Activated CD4-positive, alpha-beta T cell treated with anti-CD3 and anti-CD28 coated beads for 36 hours (primary cell): ENCODE measurements at regions of chr4 and their contacts with region 1.

Region 1: GRCh38 chr4:83639849-83640493 is 104.1 kb downstream of the GPAT3 start:
- DNase-seq: peak; percentile 65
- ATAC-seq: peak; percentile 69
- H3K4me3 Mint-ChIP-seq: no peak overlapping the region
- H3K27ac Mint-ChIP-seq: no peak overlapping the region
- H3K4me1 Mint-ChIP-seq: peaks cover 3% of the 10 kb centered on the region
- H3K27me3 Mint-ChIP-seq: peaks cover 5% of the 10 kb centered on the region

Region 2: GRCh38 chr4:83054928-83055327 is 585.0 kb before region 1 on chr4:
- CTCF ChIA-PET with region 1: no interaction called
- POLR2A ChIA-PET with region 1: no interaction called
- intact Hi-C with region 1: loop called in 1 of 2 experiments (anchors 10 kb)
- DNase-seq: no peak
- ATAC-seq: no peak
- H3K4me3 Mint-ChIP-seq: no peak overlapping the region
- H3K27ac Mint-ChIP-seq: no peak overlapping the region
- H3K4me1 Mint-ChIP-seq: no peaks in the 10 kb centered on the region
- H3K27me3 Mint-ChIP-seq: no peaks in the 10 kb centered on the region

Region 3: DNA sequence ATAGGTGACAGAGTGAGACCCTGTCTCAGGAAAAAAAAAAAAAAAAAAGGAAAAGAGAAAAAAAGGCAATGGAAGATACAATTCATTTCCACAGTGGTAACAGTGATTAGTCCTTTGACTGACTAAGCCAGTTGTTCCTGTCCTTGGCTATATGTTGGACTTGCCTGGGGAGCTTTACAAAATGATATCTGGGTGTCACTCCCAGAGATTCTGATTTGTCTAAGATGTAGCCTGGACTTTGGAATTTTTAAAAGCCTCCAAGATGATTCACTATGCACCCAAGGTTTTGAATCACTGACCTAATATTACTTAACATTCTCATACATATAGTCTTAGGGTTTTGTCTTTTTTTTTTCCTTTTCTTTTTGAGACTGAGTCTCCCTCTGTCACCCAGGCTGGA is 201.3 kb before region 1 on chr4:
- CTCF ChIA-PET with region 1: no interaction called
- POLR2A ChIA-PET with region 1: no interaction called
- intact Hi-C with region 1: no loop called
- DNase-seq: no peak
- ATAC-seq: no peak
- H3K4me3 Mint-ChIP-seq: no peak overlapping the region
- H3K27ac Mint-ChIP-seq: no peak overlapping the region
- H3K4me1 Mint-ChIP-seq: peaks cover 3% of the 10 kb centered on the region
- H3K27me3 Mint-ChIP-seq: no peaks in the 10 kb centered on the region

Region 4: GRCh38 chr4:83503974-83504373 is 136.0 kb before region 1 on chr4:
- CTCF ChIA-PET with region 1: interaction called, 29 read pairs
- POLR2A ChIA-PET with region 1: no interaction called
- intact Hi-C with region 1: loop called (anchors 1 kb)
- DNase-seq: peak; percentile 28
- ATAC-seq: peak; percentile 51
- H3K4me3 Mint-ChIP-seq: no peak overlapping the region
- H3K27ac Mint-ChIP-seq: peak overlapping the region; percentile 32
- H3K4me1 Mint-ChIP-seq: peaks cover 12% of the 10 kb centered on the region
- H3K27me3 Mint-ChIP-seq: no peaks in the 10 kb centered on the region

Region 5: GRCh38 chr4:83961575-83961974 is 321.6 kb after region 1 on chr4:
- CTCF ChIA-PET with region 1: no interaction called
- POLR2A ChIA-PET with region 1: no interaction called
- intact Hi-C with region 1: loop called in 1 of 2 experiments (anchors 10 kb)
- DNase-seq: no peak
- ATAC-seq: no peak
- H3K4me3 Mint-ChIP-seq: no peak overlapping the region
- H3K27ac Mint-ChIP-seq: no peak overlapping the region
- H3K4me1 Mint-ChIP-seq: no peaks in the 10 kb centered on the region
- H3K27me3 Mint-ChIP-seq: no peaks in the 10 kb centered on the region

Region 6: GRCh38 chr4:84503495-84504437 is 863.8 kb after region 1 on chr4:
- CTCF ChIA-PET with region 1: no interaction called
- POLR2A ChIA-PET with region 1: no interaction called
- intact Hi-C with region 1: loop called (anchors 1 kb)
- DNase-seq: peak; percentile 44
- ATAC-seq: peak; percentile 83
- H3K4me3 Mint-ChIP-seq: no peak overlapping the region
- H3K27ac Mint-ChIP-seq: no peak overlapping the region
- H3K4me1 Mint-ChIP-seq: peaks cover 6% of the 10 kb centered on the region
- H3K27me3 Mint-ChIP-seq: peaks cover 77% of the 10 kb centered on the region

Region 7: GRCh38 chr4:84971319-84971932 is 1331.5 kb after region 1 on chr4:
- CTCF ChIA-PET with region 1: interaction called, 8 read pairs
- POLR2A ChIA-PET with region 1: no interaction called
- intact Hi-C with region 1: loop called (anchors 2 to 10 kb)
- DNase-seq: no peak
- ATAC-seq: no peak
- H3K4me3 Mint-ChIP-seq: no peak overlapping the region
- H3K27ac Mint-ChIP-seq: no peak overlapping the region
- H3K4me1 Mint-ChIP-seq: peaks cover 8% of the 10 kb centered on the region
- H3K27me3 Mint-ChIP-seq: peaks cover 41% of the 10 kb centered on the region